GM13977 (cell line): ENCODE measurements at regions of chr20 and their contacts with region 1.

Region 1: DNA sequence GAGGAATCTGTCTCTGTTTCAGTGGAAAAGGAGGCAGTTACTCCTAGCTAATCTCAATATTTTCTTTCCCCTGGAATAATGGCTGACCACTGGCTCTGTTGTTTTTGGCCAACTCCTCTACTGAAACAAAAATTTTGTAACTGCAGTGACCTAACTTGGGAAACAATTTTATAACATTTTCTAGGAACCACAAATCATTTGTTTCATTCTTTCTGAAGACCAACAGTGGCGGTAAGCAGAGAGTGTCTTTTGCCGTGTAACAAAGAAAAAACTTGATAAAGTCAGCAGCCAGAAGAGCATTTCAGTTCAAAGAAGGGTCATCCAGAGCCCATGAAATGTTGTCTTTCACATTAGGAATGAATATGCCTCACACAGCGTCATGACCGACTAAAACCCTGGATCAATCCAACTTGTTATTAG is 11.8 kb upstream of the BFSP1 start:
- DNase-seq: no peak
- CTCF ChIP-seq: no peak

Region 2: DNA sequence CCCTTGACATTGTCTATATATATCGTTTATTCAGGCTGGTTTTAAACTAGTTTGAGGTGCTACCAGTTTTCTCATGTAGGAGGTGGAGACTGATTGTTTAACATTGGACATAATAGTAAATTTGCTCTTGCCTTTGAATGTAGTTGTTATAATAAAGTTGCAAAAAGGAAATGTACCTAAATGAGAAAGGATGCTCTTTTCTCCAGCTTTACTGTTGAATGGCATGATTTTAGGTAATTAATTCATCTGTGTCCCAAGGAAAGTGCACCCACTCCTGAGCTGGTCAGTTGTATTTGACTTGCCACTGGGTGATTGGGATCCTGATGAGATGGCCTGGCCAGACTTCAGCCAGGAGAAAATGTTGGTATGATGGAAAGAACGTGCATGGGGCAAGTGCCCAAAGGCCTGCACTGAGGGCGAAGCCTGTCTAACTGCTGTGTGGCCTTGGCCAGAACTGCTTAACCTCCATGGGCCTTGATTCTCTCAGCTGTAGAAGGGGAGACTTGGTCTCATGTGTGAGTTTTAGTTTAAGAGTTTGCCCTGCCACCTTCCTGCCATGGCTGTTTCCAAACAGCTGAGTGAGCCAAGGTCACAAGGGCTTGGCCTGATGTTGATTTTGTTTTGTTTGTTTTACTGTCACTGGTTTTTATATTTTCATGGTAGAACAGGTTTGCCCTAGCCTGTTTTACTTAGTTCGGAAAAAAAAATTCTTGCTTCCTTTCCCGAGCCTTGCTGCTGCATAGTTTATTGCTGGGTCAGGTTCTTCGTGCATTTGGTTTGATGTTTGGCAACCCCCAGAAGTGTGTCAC is 62.1 kb after region 1 on chr20:
- in situ Hi-C with region 1: loop called (anchors 10 kb)
- DNase-seq: no peak
- CTCF ChIP-seq: no peak

Region 3: DNA sequence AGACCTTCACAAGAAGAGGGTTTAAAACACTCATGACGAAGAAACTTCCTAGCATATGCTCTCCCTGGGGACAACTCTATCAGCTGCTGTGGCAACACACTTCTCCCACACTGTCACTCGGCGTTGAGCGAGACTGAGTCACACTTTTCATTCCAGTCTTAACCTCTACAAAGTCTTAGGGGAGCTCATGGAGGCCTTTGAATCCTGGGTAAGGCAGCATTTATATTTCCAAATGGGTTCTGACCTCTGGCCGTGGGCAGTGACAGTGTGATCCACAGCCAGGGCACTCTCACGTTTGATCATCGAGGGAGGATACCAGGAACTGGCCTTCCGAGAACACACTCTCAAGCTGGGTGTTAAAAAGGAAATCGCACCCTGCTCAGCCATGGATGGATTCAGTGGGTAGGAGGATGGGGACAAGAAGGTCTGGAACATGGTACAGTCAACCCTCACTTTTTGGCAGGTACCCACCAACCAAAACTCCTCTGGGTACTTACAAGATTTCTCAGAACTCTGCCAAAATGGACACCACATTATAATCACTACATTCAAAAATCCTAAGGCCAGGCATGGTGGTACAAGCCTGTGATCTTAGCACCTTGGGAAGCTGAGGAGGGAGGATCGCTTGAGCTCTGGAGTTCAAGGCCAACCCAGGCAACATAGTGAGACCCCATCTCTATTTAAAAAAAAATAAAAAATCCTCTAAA is 119.5 kb after region 1 on chr20:
- in situ Hi-C with region 1: no loop called
- DNase-seq: no peak
- CTCF ChIP-seq: no peak